Heart left ventricle (tissue), 16 donors: ENCODE measurements at regions of chr6 and their contacts with region 1.

Region 1: GRCh38 chr6:163405412-163406309 is 8.9 kb upstream of the QKI start:
- DNase-seq: peak; percentile 74 to 86 (median 82)
- ATAC-seq: peak; percentile 83 to 93 (median 92)
- H3K4me3 ChIP-seq: peak overlapping the region; percentile 3 to 55 (median 38)
- H3K27ac ChIP-seq: peak overlapping the region; percentile 71 to 98 (median 88)
- H3K4me1 ChIP-seq: peaks cover 4 to 47% (median 27%) of the 10 kb centered on the region in 12 donors
- H3K27me3 ChIP-seq: no peaks in the 10 kb centered on the region
- CTCF ChIP-seq: no peak
- POLR2A ChIP-seq: no peak

Region 2: GRCh38 chr6:163260111-163260895 is 145.4 kb before region 1 on chr6:
- intact Hi-C with region 1: loop called in 2 of 10 experiments (anchors 5 to 10 kb)
- DNase-seq: peak in 3 of 5 donors; percentile 47 to 73 (median 66)
- ATAC-seq: peak in 3 of 4 donors; percentile 33 to 54 (median 34)
- H3K4me3 ChIP-seq: peak overlapping the region in 9 of 12 donors; percentile 2 to 47 (median 39)
- H3K27ac ChIP-seq: peak overlapping the region; percentile 37 to 74 (median 63)
- H3K4me1 ChIP-seq: peaks cover 0 to 54% (median 18%) of the 10 kb centered on the region in 12 donors
- H3K27me3 ChIP-seq: no peaks in the 10 kb centered on the region
- CTCF ChIP-seq: no peak
- POLR2A ChIP-seq: no peak

Region 3: GRCh38 chr6:163355426-163355991 is 50.2 kb before region 1 on chr6:
- intact Hi-C with region 1: loop called in 3 of 10 experiments (anchors 5 to 10 kb)
- DNase-seq: peak; percentile 77 to 87 (median 86)
- ATAC-seq: peak; percentile 74 to 91 (median 86)
- H3K4me3 ChIP-seq: peak overlapping the region in 9 of 12 donors; percentile 17 to 36 (median 27)
- H3K27ac ChIP-seq: peak overlapping the region; percentile 54 to 97 (median 78)
- H3K4me1 ChIP-seq: peaks cover 3 to 52% (median 25%) of the 10 kb centered on the region in 12 donors
- H3K27me3 ChIP-seq: no peaks in the 10 kb centered on the region
- CTCF ChIP-seq: no peak
- POLR2A ChIP-seq: peak in 1 of 2 donors; percentile 15

Region 4: GRCh38 chr6:163364641-163365040 is 41.0 kb before region 1 on chr6:
- intact Hi-C with region 1: loop called in 2 of 10 experiments (anchors 5 to 10 kb)
- DNase-seq: no peak
- ATAC-seq: peak in 2 of 4 donors; percentile 20 to 57
- H3K4me3 ChIP-seq: no peak overlapping the region
- H3K27ac ChIP-seq: no peak overlapping the region
- H3K4me1 ChIP-seq: peaks cover 0 to 14% (median 0%) of the 10 kb centered on the region in 12 donors
- H3K27me3 ChIP-seq: no peaks in the 10 kb centered on the region
- CTCF ChIP-seq: no peak
- POLR2A ChIP-seq: no peak